HEK293T (cell line): ENCODE measurements at regions of chr15 and their contacts with region 1.

Region 1: GRCh38 chr15:78979456-78980320 is 34.8 kb upstream of the CTSH start:
- DNase-seq: peak; percentile 81

Region 2: DNA sequence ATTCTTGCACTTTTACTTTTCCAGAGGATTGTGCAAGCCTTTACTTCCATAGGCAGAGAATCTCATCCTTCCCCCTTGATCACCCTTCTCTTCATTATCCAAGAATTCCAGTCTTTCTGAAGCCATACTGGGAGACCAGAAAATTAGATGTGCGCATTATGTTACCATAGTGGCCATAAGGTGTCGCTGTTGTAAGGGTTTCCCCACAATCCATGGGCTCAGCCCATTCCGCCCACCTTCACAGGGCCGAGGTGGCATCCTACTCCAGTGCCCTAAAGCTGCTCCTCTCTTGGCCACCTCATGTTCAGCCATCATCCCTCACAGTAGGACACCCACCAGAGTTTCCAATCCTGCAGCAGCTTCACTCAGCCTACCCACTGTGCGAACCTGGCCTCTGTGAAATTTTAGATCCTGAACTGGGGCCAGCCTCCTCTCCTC is 69.9 kb before region 1 on chr15:
- CTCF ChIA-PET with region 1: interaction called, 17 read pairs
- POLR2A ChIA-PET with region 1: no interaction called
- DNase-seq: peak; percentile 73

Region 3: DNA sequence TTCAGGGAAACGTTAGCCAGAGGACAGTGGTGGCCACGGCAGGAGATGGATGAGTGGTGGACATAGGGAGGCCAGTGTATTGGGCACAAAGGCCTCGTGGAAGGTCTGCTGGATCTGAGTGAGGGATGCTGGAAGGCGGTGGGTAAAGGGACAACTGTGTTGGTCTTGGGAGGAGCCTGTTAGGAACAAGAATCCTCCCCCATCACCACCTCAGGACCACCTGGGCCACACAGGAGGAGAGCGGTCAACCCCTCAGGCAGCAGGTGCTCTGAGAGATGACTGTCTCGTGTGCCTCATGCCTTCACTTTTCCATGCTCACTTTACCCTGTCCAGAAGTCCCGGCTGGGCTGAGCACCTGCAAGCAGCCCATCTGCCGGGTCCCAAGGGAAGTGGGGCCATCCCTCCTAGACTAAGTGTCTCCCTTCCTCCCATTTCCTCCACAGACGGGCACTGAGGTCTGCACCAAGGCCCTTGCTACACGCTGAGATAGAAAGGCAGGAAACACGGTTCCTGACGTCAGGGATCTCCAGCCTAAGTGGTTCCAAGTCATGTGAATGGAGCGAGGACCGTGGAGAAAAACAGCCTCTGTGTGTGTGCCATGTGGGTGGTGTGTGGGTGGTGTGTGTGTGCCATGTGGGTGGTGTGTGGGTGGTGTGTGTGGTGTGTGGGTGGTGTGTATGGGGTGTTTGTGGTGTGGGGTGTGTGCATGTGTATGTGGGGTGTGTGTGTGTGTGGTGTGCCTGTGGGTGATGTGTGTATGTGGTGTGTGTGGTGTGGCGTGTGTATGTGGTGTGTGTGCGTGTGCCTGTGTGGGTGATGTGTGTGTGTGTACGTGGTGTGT is 12.9 kb after region 1 on chr15:
- CTCF ChIA-PET with region 1: interaction called, 11 read pairs
- POLR2A ChIA-PET with region 1: no interaction called
- DNase-seq: no peak